Caco-2 (cell line): ENCODE measurements at regions of chr13 and their contacts with region 1.

Region 1: GRCh38 chr13:49792550-49793324 is at the start of gene KPNA3:
- DNase-seq: peak; percentile 96 to 97
- H3K4me3 ChIP-seq: peak within 1 kb of the TSS; percentile 92
- H3K4me3 Mint-ChIP-seq: peak within 1 kb of the TSS; percentile 83
- H3K27ac Mint-ChIP-seq: peak within 1 kb of the TSS; percentile 88
- H3K4me1 ChIP-seq: peaks cover 31% of the 10 kb centered on the region
- H3K4me1 Mint-ChIP-seq: peaks cover 14% of the 10 kb centered on the region
- H3K27me3 ChIP-seq: no peaks in the 10 kb centered on the region
- H3K27me3 Mint-ChIP-seq: no peaks in the 10 kb centered on the region
- CTCF ChIP-seq: peak; percentile 11 to 37
- total RNA-seq, gene KPNA3: 81.3 and 81.9 TPM in 2 replicates

Region 2: DNA sequence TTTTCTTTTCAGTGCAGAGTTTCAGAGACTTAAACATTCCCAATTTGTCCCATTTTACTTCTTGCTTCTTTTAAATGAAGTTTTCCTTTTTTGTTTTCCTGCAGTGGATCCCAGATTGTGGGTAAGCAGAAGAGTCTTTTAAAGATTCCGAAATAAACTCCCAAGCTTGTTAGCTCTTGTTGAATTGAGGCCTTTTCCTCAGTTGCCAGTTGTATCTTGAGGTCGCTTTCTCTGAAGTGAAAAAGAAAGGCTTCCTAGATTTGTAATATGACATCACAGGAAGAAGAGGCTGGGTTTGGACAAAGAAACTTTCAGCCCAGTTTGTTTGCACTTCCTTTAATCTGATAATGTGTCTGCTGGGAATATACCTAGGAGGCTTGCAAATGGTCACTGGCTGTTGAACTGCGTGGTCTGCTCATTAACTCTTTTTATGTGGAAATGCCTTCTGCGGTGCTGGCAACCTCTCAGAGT is 1379.8 kb before region 1 on chr13 and contains the start of gene LPAR6:
- CTCF ChIA-PET with region 1: no interaction called
- POLR2A ChIA-PET with region 1: no interaction called
- intact Hi-C with region 1: no loop called
- DNase-seq: peak in 1 of 2 experiments; percentile 3
- H3K4me3 ChIP-seq: no peak within 1 kb of the TSS
- H3K4me3 Mint-ChIP-seq: no peak within 1 kb of the TSS
- H3K27ac Mint-ChIP-seq: no peak within 1 kb of the TSS
- H3K4me1 ChIP-seq: peaks cover 6% of the 10 kb centered on the region; the same call in 1 of the 2 replicates
- H3K4me1 Mint-ChIP-seq: no peaks in the 10 kb centered on the region
- H3K27me3 ChIP-seq: no peaks in the 10 kb centered on the region
- H3K27me3 Mint-ChIP-seq: no peaks in the 10 kb centered on the region
- CTCF ChIP-seq: no peak
- total RNA-seq, gene LPAR6: not detected in 2 replicates

Region 3: GRCh38 chr13:49652355-49653305 is 140.1 kb before region 1 on chr13:
- CTCF ChIA-PET with region 1: interaction called, 3 read pairs
- POLR2A ChIA-PET with region 1: interaction called, 4 read pairs
- intact Hi-C with region 1: loop called (anchors 1 kb)
- DNase-seq: peak; percentile 65 to 72
- H3K4me3 ChIP-seq: no peak overlapping the region
- H3K4me3 Mint-ChIP-seq: no peak overlapping the region
- H3K27ac Mint-ChIP-seq: no peak overlapping the region
- H3K4me1 ChIP-seq: no peaks in the 10 kb centered on the region
- H3K4me1 Mint-ChIP-seq: no peaks in the 10 kb centered on the region
- H3K27me3 ChIP-seq: no peaks in the 10 kb centered on the region
- H3K27me3 Mint-ChIP-seq: no peaks in the 10 kb centered on the region
- CTCF ChIP-seq: peak; percentile 75 to 80

Region 4: DNA sequence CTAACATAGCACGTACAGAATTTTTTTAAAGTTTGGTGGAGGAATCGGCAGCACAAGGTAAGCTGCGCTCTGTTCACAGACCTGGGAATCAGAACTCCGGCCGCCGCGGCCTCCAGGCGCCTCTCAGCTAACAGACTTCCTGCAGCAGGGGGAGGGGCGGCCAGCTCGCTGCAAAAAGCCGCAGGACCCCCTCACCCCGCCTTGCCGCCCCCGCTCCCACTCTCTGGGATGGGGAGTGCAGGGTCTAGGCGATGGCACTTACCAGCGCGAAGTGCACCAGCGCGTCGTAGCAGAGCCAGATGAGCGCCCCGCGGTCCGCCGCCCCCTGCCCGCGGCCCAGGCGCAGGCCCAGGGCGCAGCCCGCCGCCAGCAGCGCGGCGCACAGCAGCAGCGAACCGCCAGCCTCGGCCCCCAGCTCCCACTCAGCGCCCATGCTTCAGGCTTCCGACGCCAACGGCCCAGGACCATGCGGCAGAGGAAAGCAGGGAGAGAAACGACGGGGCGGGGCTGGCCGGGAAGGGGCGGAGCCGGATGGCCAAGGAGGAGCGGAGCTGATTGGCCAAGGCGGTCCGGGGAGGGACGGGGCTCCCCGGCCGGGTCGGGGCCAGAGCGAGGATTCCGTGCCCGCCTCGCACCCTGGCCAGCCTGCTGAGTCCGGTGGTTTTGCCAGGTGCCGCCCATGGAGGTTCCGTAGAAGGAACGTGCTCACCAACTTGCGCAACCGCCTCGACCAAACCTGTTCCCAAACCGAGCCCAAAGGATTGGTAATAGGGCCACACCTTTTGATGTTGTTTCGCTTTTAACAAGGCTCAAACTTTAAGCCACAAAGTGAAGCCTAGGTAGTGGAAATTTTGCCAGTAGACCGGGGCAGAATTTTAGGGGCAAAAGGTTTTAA is 101.5 kb before region 1 on chr13 and contains the start of gene EBPL:
- CTCF ChIA-PET with region 1: interaction called, 6 read pairs
- POLR2A ChIA-PET with region 1: interaction called, 20 read pairs
- intact Hi-C with region 1: loop called (anchors 2 kb)
- DNase-seq: peak; percentile 96 to 97
- H3K4me3 ChIP-seq: peak within 1 kb of the TSS; percentile 67
- H3K4me3 Mint-ChIP-seq: peak within 1 kb of the TSS; percentile 83
- H3K27ac Mint-ChIP-seq: peak within 1 kb of the TSS; percentile 79
- H3K4me1 ChIP-seq: peaks cover 27% of the 10 kb centered on the region; the same call in 1 of the 2 replicates
- H3K4me1 Mint-ChIP-seq: peaks cover 27% of the 10 kb centered on the region
- H3K27me3 ChIP-seq: no peaks in the 10 kb centered on the region
- H3K27me3 Mint-ChIP-seq: no peaks in the 10 kb centered on the region
- CTCF ChIP-seq: no peak
- total RNA-seq, gene EBPL: 105 and 114 TPM in 2 replicates

Region 5: DNA sequence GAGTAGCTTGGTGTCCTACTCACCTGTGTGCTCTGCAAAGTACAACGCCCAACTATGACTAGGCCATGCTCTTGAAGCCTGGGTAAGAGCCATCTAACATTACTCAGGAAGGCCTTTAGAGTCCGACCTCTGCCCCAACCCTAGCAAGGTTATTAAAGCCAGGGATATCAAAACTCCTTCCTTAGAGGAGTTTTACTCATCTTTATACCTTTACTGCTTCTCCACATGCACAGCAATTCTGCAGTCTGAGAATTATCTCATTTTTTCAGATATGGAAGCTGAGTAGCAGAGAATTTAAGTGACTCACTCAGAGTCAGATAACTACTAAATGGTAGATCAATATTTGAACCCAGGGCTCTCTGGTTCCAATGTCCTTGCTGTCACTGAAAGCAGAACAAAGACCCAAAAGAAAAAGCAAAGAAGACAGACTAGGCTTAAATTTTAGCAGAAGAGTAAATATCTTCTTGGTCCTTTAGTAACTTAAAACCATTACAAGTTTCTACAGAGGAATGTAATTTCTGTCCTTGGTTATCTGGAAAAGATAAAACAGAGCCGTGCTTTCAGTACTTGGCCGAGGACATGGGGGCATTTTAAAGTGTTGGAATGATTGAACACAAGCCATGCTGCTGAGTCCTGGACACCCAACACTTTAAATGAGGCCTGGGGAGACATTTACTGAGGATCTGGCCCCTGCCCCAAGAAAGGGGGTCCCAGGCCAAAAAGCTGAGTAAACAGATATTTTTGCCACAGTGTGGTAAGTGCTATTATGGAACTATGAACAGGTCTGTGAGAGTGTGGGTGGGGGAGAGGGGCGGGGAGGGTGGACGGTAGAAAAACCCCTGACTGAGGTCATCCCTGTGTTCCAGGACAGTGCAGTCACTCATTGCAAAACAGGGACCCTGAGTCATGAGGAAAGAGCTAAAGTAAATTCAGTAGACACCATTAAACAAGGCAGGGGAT is 18.1 kb after region 1 on chr13:
- CTCF ChIA-PET with region 1: interaction called, 7 read pairs
- POLR2A ChIA-PET with region 1: interaction called, 17 read pairs
- intact Hi-C with region 1: loop called (anchors 1 kb)
- DNase-seq: peak; percentile 76 to 89
- H3K4me3 ChIP-seq: no peak overlapping the region; the same call in 1 of the 2 replicates
- H3K4me3 Mint-ChIP-seq: peak overlapping the region; percentile 63
- H3K27ac Mint-ChIP-seq: peak overlapping the region; percentile 91
- H3K4me1 ChIP-seq: peaks cover 90% of the 10 kb centered on the region
- H3K4me1 Mint-ChIP-seq: peaks cover 49% of the 10 kb centered on the region
- H3K27me3 ChIP-seq: no peaks in the 10 kb centered on the region
- H3K27me3 Mint-ChIP-seq: no peaks in the 10 kb centered on the region
- CTCF ChIP-seq: no peak

Region 6: GRCh38 chr13:49840266-49840665 is 47.5 kb after region 1 on chr13:
- CTCF ChIA-PET with region 1: interaction called, 6 read pairs
- POLR2A ChIA-PET with region 1: interaction called, 14 read pairs
- intact Hi-C with region 1: loop called (anchors 2 kb)
- DNase-seq: peak in 1 of 2 experiments; percentile 48
- H3K4me3 ChIP-seq: no peak overlapping the region
- H3K4me3 Mint-ChIP-seq: no peak overlapping the region
- H3K27ac Mint-ChIP-seq: peak overlapping the region; percentile 37
- H3K4me1 ChIP-seq: peaks cover 50% of the 10 kb centered on the region
- H3K4me1 Mint-ChIP-seq: peaks cover 43% of the 10 kb centered on the region
- H3K27me3 ChIP-seq: no peaks in the 10 kb centered on the region
- H3K27me3 Mint-ChIP-seq: no peaks in the 10 kb centered on the region
- CTCF ChIP-seq: no peak

Region 7: DNA sequence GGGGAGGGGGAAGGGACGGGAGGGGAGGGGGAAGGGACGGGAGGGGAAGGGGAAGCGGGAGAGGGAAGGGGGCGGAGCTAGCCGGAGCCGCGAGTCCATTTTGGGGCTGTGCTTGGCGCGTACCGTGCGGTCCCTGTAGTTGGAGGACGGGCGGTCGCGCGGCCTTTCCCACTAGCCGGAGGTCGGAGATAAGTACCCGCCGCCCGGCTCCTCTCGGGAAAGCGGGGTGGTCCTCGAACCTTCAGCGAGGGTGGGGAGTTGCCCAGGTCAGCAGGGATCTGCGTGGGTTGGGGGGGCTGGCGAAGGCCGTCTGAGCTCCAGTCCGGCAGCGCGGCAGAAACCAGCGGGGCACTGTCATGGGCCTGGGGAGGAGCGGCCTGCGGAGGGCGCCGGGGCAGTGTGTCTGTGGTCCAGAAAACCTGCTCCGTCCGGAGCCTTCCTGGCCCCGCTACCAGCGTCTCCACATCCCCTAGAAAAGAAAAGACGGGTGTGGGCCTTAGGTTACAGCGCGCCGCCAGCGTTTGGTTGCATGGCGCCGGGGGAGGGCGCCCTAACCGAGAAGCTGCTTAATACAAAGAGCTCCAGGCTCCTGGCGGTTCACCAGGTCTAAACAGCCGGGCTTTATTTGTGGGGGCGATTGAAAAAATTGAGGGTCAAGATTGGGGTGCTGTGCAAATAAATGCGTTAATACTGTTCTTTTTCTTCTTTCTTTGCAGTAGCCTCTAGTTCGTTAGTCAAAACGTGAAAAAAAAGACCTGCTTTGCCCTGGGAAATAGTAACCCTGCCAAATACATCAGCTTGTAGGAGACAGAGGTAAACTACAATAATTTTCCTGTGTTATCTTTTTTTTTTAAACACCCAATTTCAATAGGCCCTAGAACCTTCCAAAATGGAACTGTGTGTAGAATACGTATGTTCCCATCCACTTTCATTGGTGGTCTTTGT is 204.5 kb after region 1 on chr13 and contains the start of gene TRIM13:
- CTCF ChIA-PET with region 1: interaction called, 9 read pairs
- POLR2A ChIA-PET with region 1: interaction called, 9 read pairs
- intact Hi-C with region 1: loop called (anchors 2 kb)
- DNase-seq: peak; percentile 91
- H3K4me3 ChIP-seq: peak within 1 kb of the TSS; percentile 77
- H3K4me3 Mint-ChIP-seq: peak within 1 kb of the TSS; percentile 92
- H3K27ac Mint-ChIP-seq: peak within 1 kb of the TSS; percentile 91
- H3K4me1 ChIP-seq: peaks cover 29% of the 10 kb centered on the region
- H3K4me1 Mint-ChIP-seq: peaks cover 9% of the 10 kb centered on the region
- H3K27me3 ChIP-seq: no peaks in the 10 kb centered on the region
- H3K27me3 Mint-ChIP-seq: no peaks in the 10 kb centered on the region
- CTCF ChIP-seq: peak; percentile 79 to 93
- total RNA-seq, gene TRIM13: 16.5 and 21.0 TPM in 2 replicates

Region 8: GRCh38 chr13:50494138-50494537 is 701.4 kb after region 1 on chr13:
- CTCF ChIA-PET with region 1: no interaction called
- POLR2A ChIA-PET with region 1: interaction called, 11 read pairs
- intact Hi-C with region 1: no loop called
- DNase-seq: no peak
- H3K4me3 ChIP-seq: no peak overlapping the region
- H3K4me3 Mint-ChIP-seq: no peak overlapping the region
- H3K27ac Mint-ChIP-seq: no peak overlapping the region
- H3K4me1 ChIP-seq: no peaks in the 10 kb centered on the region
- H3K4me1 Mint-ChIP-seq: no peaks in the 10 kb centered on the region
- H3K27me3 ChIP-seq: no peaks in the 10 kb centered on the region
- H3K27me3 Mint-ChIP-seq: no peaks in the 10 kb centered on the region
- CTCF ChIP-seq: no peak